ENCODE measurements at regions of chr12 and their contacts with region 1.

Region 1: GRCh38 chr12:112382232-112382796 is at the start of gene HECTD4:
- DNase-seq: peak; percentile 93
- ATAC-seq: peak; percentile 97
- H3K4me3 ChIP-seq: peak within 1 kb of the TSS; percentile 50 to 80 (median 71)
- H3K4me3 Mint-ChIP-seq: peak within 1 kb of the TSS; percentile 97
- H3K27ac ChIP-seq: peak within 1 kb of the TSS; percentile 48 to 68
- H3K27ac Mint-ChIP-seq: peak within 1 kb of the TSS; percentile 94
- H3K4me1 ChIP-seq: peaks cover 19 to 23% of the 10 kb centered on the region in 2 donors
- H3K4me1 Mint-ChIP-seq: peaks cover 28% of the 10 kb centered on the region
- H3K27me3 ChIP-seq: no peaks in the 10 kb centered on the region
- H3K27me3 Mint-ChIP-seq: no peaks in the 10 kb centered on the region
- CTCF ChIP-seq: no peak
- total RNA-seq, gene HECTD4: 92.2 and 93.1 TPM in 2 replicates

Region 2: GRCh38 chr12:112012775-112013600 is 369.3 kb before region 1 on chr12 and contains the starts of genes ERP29 and TMEM116:
- CTCF ChIA-PET with region 1: no interaction called
- POLR2A ChIA-PET with region 1: no interaction called
- intact Hi-C with region 1: loop called (anchors 1 kb)
- DNase-seq: peak; percentile 99
- ATAC-seq: peak; percentile 75
- H3K4me3 ChIP-seq: peak within 1 kb of the TSS; percentile 50 to 97 (median 88)
- H3K4me3 Mint-ChIP-seq: peak within 1 kb of the TSS; percentile 87
- H3K27ac ChIP-seq: peak within 1 kb of the TSS; percentile 92 to 93
- H3K27ac Mint-ChIP-seq: peak within 1 kb of the TSS; percentile 91
- H3K4me1 ChIP-seq: peaks cover 45 to 54% of the 10 kb centered on the region in 2 donors
- H3K4me1 Mint-ChIP-seq: peaks cover 46% of the 10 kb centered on the region
- H3K27me3 ChIP-seq: no peaks in the 10 kb centered on the region
- H3K27me3 Mint-ChIP-seq: no peaks in the 10 kb centered on the region
- CTCF ChIP-seq: peak; percentile 69
- total RNA-seq, gene ERP29: 149 and 152 TPM in 2 replicates
- total RNA-seq, gene TMEM116: 10.4 and 11.7 TPM in 2 replicates

Region 3: GRCh38 chr12:112125250-112125999 is 256.9 kb before region 1 on chr12 and contains the start of gene TRAFD1:
- CTCF ChIA-PET with region 1: no interaction called
- POLR2A ChIA-PET with region 1: no interaction called
- intact Hi-C with region 1: loop called (anchors 1 kb)
- DNase-seq: peak; percentile 98
- ATAC-seq: peak; percentile 98
- H3K4me3 ChIP-seq: peak within 1 kb of the TSS; percentile 64 to 88 (median 86)
- H3K4me3 Mint-ChIP-seq: peak within 1 kb of the TSS; percentile 76
- H3K27ac ChIP-seq: peak within 1 kb of the TSS; percentile 62 to 86
- H3K27ac Mint-ChIP-seq: peak within 1 kb of the TSS; percentile 89
- H3K4me1 ChIP-seq: peaks cover 40 to 47% of the 10 kb centered on the region in 2 donors
- H3K4me1 Mint-ChIP-seq: peaks cover 43% of the 10 kb centered on the region
- H3K27me3 ChIP-seq: no peaks in the 10 kb centered on the region
- H3K27me3 Mint-ChIP-seq: peaks cover 4% of the 10 kb centered on the region
- CTCF ChIP-seq: no peak
- total RNA-seq, gene TRAFD1: 37.2 and 37.7 TPM in 2 replicates

Region 4: DNA sequence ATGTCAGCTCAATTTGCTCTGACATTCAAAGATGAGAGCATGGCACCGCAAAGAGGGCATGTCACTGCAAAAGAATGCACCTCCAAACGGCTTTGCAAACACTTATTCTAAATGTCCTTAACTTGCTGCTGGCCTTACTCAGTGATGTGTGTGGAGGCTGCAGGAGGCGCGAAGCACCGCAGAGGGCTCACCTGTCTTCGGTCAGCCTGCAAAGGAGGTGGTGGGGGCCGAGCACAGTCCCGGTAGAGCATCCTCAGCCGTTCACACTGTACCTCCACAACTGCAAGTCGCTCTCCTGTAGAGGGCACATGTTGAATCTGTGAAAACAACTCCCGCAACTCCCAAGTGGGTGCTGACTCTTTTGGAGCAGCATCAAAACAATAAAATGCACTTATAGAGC is 163.1 kb before region 1 on chr12:
- CTCF ChIA-PET with region 1: interaction called, 7 read pairs
- POLR2A ChIA-PET with region 1: no interaction called
- intact Hi-C with region 1: loop called (anchors 5 kb)
- DNase-seq: no peak
- ATAC-seq: no peak
- H3K4me3 ChIP-seq: no peak overlapping the region
- H3K4me3 Mint-ChIP-seq: no peak overlapping the region
- H3K27ac ChIP-seq: peak overlapping the region in 1 of 2 donors; percentile 30
- H3K27ac Mint-ChIP-seq: no peak overlapping the region
- H3K4me1 ChIP-seq: peaks cover 27 to 36% of the 10 kb centered on the region in 2 donors
- H3K4me1 Mint-ChIP-seq: peaks cover 39% of the 10 kb centered on the region
- H3K27me3 ChIP-seq: no peaks in the 10 kb centered on the region
- H3K27me3 Mint-ChIP-seq: no peaks in the 10 kb centered on the region
- CTCF ChIP-seq: no peak

Region 5: GRCh38 chr12:112401903-112402498 is 19.7 kb after region 1 on chr12:
- CTCF ChIA-PET with region 1: interaction called, 10 read pairs
- POLR2A ChIA-PET with region 1: no interaction called
- intact Hi-C with region 1: no loop called
- DNase-seq: no peak
- ATAC-seq: no peak
- H3K4me3 ChIP-seq: no peak overlapping the region
- H3K4me3 Mint-ChIP-seq: no peak overlapping the region
- H3K27ac ChIP-seq: peak overlapping the region in 1 of 2 donors; percentile 23
- H3K27ac Mint-ChIP-seq: no peak overlapping the region
- H3K4me1 ChIP-seq: no peaks in the 10 kb centered on the region
- H3K4me1 Mint-ChIP-seq: peaks cover 3% of the 10 kb centered on the region
- H3K27me3 ChIP-seq: no peaks in the 10 kb centered on the region
- H3K27me3 Mint-ChIP-seq: no peaks in the 10 kb centered on the region
- CTCF ChIP-seq: no peak

Region 6: GRCh38 chr12:112418608-112419298 is 36.4 kb after region 1 on chr12 and contains the start of gene PTPN11:
- CTCF ChIA-PET with region 1: interaction called, 4 read pairs
- POLR2A ChIA-PET with region 1: no interaction called
- intact Hi-C with region 1: loop called (anchors 1 kb)
- DNase-seq: peak; percentile 95
- ATAC-seq: peak; percentile 84
- H3K4me3 ChIP-seq: peak within 1 kb of the TSS; percentile 77 to 97 (median 95)
- H3K4me3 Mint-ChIP-seq: peak within 1 kb of the TSS; percentile 97
- H3K27ac ChIP-seq: peak within 1 kb of the TSS; percentile 86 to 89
- H3K27ac Mint-ChIP-seq: peak within 1 kb of the TSS; percentile 95
- H3K4me1 ChIP-seq: peaks cover 13 to 18% of the 10 kb centered on the region in 2 donors
- H3K4me1 Mint-ChIP-seq: peaks cover 32% of the 10 kb centered on the region
- H3K27me3 ChIP-seq: no peaks in the 10 kb centered on the region
- H3K27me3 Mint-ChIP-seq: no peaks in the 10 kb centered on the region
- CTCF ChIP-seq: peak; percentile 71
- total RNA-seq, gene PTPN11: 49.8 and 53.1 TPM in 2 replicates